Adrenal gland (tissue), 19 donors: ENCODE measurements at regions of chr9 and their contacts with region 1.

Region 1: GRCh38 chr9:69421908-69422801 is 97.1 kb downstream of the ENTREP1 start:
- DNase-seq: peak; percentile 44 to 77 (median 53)
- H3K4me3 ChIP-seq: no peak overlapping the region
- H3K27ac ChIP-seq: no peak overlapping the region
- H3K4me1 ChIP-seq: no peaks in the 10 kb centered on the region
- H3K27me3 ChIP-seq: no peaks in the 10 kb centered on the region
- CTCF ChIP-seq: peak; percentile 69 to 89 (median 82)
- POLR2A ChIP-seq: no peak

Region 2: GRCh38 chr9:68919661-68920060 is 502.5 kb before region 1 on chr9:
- intact Hi-C with region 1: no loop called
- DNase-seq: no peak
- H3K4me3 ChIP-seq: no peak overlapping the region
- H3K27ac ChIP-seq: no peak overlapping the region
- H3K4me1 ChIP-seq: no peaks in the 10 kb centered on the region
- H3K27me3 ChIP-seq: no peaks in the 10 kb centered on the region
- CTCF ChIP-seq: no peak
- POLR2A ChIP-seq: no peak

Region 3: DNA sequence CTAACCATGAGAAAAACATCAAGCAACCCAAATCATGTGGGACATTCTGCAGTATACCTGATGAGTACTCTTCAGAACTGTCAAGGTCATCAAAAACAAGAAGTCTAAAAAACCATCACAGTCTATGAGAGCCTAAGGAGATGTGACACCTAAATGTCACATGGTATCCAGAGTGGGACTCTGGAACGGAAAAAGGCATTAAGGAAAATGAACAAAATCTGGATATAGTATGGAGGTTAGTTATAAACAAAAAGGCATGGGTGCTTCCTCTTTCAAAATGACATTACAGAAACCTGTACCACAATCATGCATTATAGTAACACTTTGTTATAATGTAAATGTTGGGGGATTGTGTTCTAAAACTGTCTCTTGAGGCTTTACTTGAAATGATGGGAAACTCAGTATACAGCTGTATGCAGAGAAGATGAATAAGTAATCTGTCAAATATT is 455.6 kb before region 1 on chr9:
- intact Hi-C with region 1: no loop called
- DNase-seq: no peak
- H3K4me3 ChIP-seq: no peak overlapping the region
- H3K27ac ChIP-seq: no peak overlapping the region
- H3K4me1 ChIP-seq: peaks cover 0 to 6% of the 10 kb centered on the region in 2 donors
- H3K27me3 ChIP-seq: no peaks in the 10 kb centered on the region
- CTCF ChIP-seq: no peak
- POLR2A ChIP-seq: no peak

Region 4: GRCh38 chr9:69397384-69398214 is 24.6 kb before region 1 on chr9:
- intact Hi-C with region 1: no loop called
- DNase-seq: peak in 6 of 7 donors; percentile 37 to 63 (median 50)
- H3K4me3 ChIP-seq: no peak overlapping the region
- H3K27ac ChIP-seq: peak overlapping the region in 1 of 5 donors; percentile 26
- H3K4me1 ChIP-seq: peaks cover 0 to 1% of the 10 kb centered on the region in 2 donors
- H3K27me3 ChIP-seq: no peaks in the 10 kb centered on the region
- CTCF ChIP-seq: no peak
- POLR2A ChIP-seq: no peak

Region 5: DNA sequence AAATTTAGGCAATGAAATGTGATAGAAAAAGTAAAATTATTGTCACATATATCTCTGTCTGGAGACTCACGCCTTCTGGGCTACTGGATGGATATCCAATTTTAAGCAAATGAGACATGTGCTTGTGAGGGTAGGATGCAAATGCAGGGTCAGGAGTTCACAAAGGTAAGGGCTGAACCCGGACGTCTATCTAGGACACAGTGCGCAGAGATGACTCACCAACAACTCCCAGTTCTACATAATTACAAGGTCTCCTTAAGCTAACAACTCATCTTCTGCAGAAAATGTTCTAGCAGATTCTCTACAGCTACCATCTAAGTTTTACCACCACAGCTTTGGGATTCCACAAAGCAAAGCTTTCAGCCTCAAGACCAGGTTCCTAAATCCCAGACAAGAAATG is 63.3 kb after region 1 on chr9:
- intact Hi-C with region 1: no loop called
- DNase-seq: no peak
- H3K4me3 ChIP-seq: no peak overlapping the region
- H3K27ac ChIP-seq: no peak overlapping the region
- H3K4me1 ChIP-seq: no peaks in the 10 kb centered on the region
- H3K27me3 ChIP-seq: no peaks in the 10 kb centered on the region
- CTCF ChIP-seq: no peak
- POLR2A ChIP-seq: no peak

Region 6: GRCh38 chr9:69549310-69550202 is 127.4 kb after region 1 on chr9:
- intact Hi-C with region 1: loop called (anchors 2 to 5 kb)
- DNase-seq: peak in 5 of 7 donors; percentile 17 to 32 (median 25)
- H3K4me3 ChIP-seq: no peak overlapping the region
- H3K27ac ChIP-seq: no peak overlapping the region
- H3K4me1 ChIP-seq: no peaks in the 10 kb centered on the region
- H3K27me3 ChIP-seq: no peaks in the 10 kb centered on the region
- CTCF ChIP-seq: peak; percentile 68 to 87 (median 77)
- POLR2A ChIP-seq: no peak

Region 7: GRCh38 chr9:69877854-69878514 is 455.8 kb after region 1 on chr9:
- intact Hi-C with region 1: loop called in 1 of 2 experiments (anchors 5 kb)
- DNase-seq: no peak
- H3K4me3 ChIP-seq: no peak overlapping the region
- H3K27ac ChIP-seq: no peak overlapping the region
- H3K4me1 ChIP-seq: peaks cover 0 to 7% of the 10 kb centered on the region in 2 donors
- H3K27me3 ChIP-seq: no peaks in the 10 kb centered on the region
- CTCF ChIP-seq: peak; percentile 43 to 72 (median 58)
- POLR2A ChIP-seq: no peak

Region 8: GRCh38 chr9:69919461-69920061 is 497.4 kb after region 1 on chr9:
- intact Hi-C with region 1: loop called in 1 of 2 experiments (anchors 10 kb)
- DNase-seq: peak in 1 of 7 donors; percentile 2
- H3K4me3 ChIP-seq: no peak overlapping the region
- H3K27ac ChIP-seq: no peak overlapping the region
- H3K4me1 ChIP-seq: no peaks in the 10 kb centered on the region
- H3K27me3 ChIP-seq: peaks cover 8% of the 10 kb centered on the region
- CTCF ChIP-seq: peak; percentile 55 to 74 (median 62)
- POLR2A ChIP-seq: no peak